ENCODE measurements at regions of chr5 and their contacts with region 1.

Region 1: GRCh38 chr5:40277161-40277906 is 402.4 kb upstream of the PTGER4 start:
- DNase-seq: peak; percentile 77
- H3K4me3 Mint-ChIP-seq: peak overlapping the region; percentile 72
- H3K27ac Mint-ChIP-seq: peak overlapping the region; percentile 96
- H3K4me1 Mint-ChIP-seq: peaks cover 43% of the 10 kb centered on the region
- H3K27me3 Mint-ChIP-seq: no peaks in the 10 kb centered on the region

Region 2: GRCh38 chr5:40223884-40224402 is 53.4 kb before region 1 on chr5:
- intact Hi-C with region 1: loop called (anchors 1 kb)
- DNase-seq: peak; percentile 82
- H3K4me3 Mint-ChIP-seq: peak overlapping the region; percentile 58
- H3K27ac Mint-ChIP-seq: peak overlapping the region; percentile 90
- H3K4me1 Mint-ChIP-seq: peaks cover 43% of the 10 kb centered on the region
- H3K27me3 Mint-ChIP-seq: no peaks in the 10 kb centered on the region

Region 3: GRCh38 chr5:40292006-40292405 is 14.7 kb after region 1 on chr5:
- intact Hi-C with region 1: loop called (anchors 2 kb)
- DNase-seq: no peak
- H3K4me3 Mint-ChIP-seq: no peak overlapping the region
- H3K27ac Mint-ChIP-seq: no peak overlapping the region
- H3K4me1 Mint-ChIP-seq: peaks cover 8% of the 10 kb centered on the region
- H3K27me3 Mint-ChIP-seq: no peaks in the 10 kb centered on the region

Region 4: DNA sequence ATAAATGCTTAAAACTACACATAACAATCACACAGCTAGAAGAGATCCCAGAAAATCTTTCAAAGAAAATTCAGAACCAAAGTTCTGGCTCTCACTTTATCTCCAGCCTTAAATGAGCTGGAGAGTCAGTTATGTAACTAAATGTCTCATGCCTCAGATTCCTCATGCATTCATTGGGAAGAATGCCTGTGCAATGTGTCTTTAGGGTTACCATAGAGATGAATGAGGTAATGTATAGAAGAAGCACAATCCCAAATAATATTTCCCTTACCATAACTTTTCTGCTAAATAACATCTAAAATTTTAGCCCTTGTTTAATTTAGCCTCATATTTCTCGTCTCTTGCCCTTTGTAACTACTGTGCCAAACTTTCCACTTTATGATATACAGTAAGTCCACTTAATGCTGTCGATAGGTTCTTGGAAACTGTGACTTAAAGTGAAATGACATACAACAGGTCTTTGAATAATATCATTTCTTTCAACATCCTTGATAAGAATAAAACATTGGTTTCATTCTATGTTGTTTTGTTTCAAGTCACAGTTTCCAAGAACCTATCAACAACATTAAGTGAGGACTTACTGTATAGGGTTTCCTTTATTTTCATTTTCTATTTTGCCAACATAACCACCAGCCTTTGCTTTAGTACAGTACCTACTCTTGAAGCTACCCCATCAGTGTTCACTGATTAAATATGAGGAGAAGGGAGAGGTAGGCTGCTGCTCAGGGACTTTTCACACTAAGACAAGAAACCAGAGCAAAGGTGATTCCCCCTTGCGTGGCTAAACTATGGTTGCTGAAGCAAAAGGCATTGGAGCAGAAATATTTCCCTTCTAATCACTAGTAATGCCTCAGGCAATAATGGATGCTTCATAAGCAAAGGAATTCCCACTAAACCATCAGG is 106.7 kb after region 1 on chr5:
- intact Hi-C with region 1: loop called (anchors 1 kb)
- DNase-seq: peak; percentile 80
- H3K4me3 Mint-ChIP-seq: peak overlapping the region; percentile 63
- H3K27ac Mint-ChIP-seq: peak overlapping the region; percentile 86
- H3K4me1 Mint-ChIP-seq: peaks cover 70% of the 10 kb centered on the region
- H3K27me3 Mint-ChIP-seq: no peaks in the 10 kb centered on the region

Region 5: DNA sequence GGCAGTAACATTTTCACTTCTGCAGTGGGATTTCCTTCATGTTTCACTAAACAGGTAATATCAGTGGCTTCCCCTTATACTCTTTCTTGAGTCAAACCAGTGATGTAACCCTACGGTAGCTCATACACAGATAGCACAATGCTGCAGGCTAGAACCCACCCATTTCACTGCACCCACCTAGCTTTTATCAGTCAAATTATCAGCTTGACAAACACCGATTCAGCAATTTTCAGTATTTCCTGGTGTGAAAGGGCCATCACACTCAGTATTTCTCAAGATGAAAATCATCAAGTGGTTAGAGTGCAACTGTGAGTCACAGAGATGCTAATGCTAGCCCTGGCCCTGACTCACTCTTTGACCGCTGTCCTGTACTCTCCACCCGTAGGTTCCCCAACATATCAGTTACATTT is 160.1 kb after region 1 on chr5:
- intact Hi-C with region 1: loop called (anchors 1 kb)
- DNase-seq: peak; percentile 66
- H3K4me3 Mint-ChIP-seq: peak overlapping the region; percentile 16
- H3K27ac Mint-ChIP-seq: peak overlapping the region; percentile 79
- H3K4me1 Mint-ChIP-seq: peaks cover 69% of the 10 kb centered on the region
- H3K27me3 Mint-ChIP-seq: no peaks in the 10 kb centered on the region

Region 6: GRCh38 chr5:40518511-40518967 is 241.2 kb after region 1 on chr5:
- intact Hi-C with region 1: no loop called
- DNase-seq: no peak
- H3K4me3 Mint-ChIP-seq: no peak overlapping the region
- H3K27ac Mint-ChIP-seq: peak overlapping the region; percentile 7
- H3K4me1 Mint-ChIP-seq: peaks cover 33% of the 10 kb centered on the region
- H3K27me3 Mint-ChIP-seq: no peaks in the 10 kb centered on the region

Region 7: GRCh38 chr5:40679155-40679913 is 402.0 kb after region 1 on chr5:
- intact Hi-C with region 1: loop called (anchors 1 kb)
- DNase-seq: peak; percentile 98
- H3K4me3 Mint-ChIP-seq: peak overlapping the region; percentile 99
- H3K27ac Mint-ChIP-seq: peak overlapping the region; percentile 99
- H3K4me1 Mint-ChIP-seq: peaks cover 48% of the 10 kb centered on the region
- H3K27me3 Mint-ChIP-seq: no peaks in the 10 kb centered on the region

Region 8: GRCh38 chr5:40774623-40775022 is 497.3 kb after region 1 on chr5:
- intact Hi-C with region 1: no loop called
- DNase-seq: no peak
- H3K4me3 Mint-ChIP-seq: no peak overlapping the region
- H3K27ac Mint-ChIP-seq: no peak overlapping the region
- H3K4me1 Mint-ChIP-seq: peaks cover 6% of the 10 kb centered on the region
- H3K27me3 Mint-ChIP-seq: no peaks in the 10 kb centered on the region

Measured in activated CD4-positive, alpha-beta T cell treated with anti-CD3 and anti-CD28 coated beads, Interleukin-2, amount 10 ng/mL, durations not matched to agents 24 days and 14 days (primary cell).